Heart right ventricle (tissue), 16 donors: ENCODE measurements at regions of chr1 and their contacts with region 1.

Region 1: GRCh38 chr1:56561227-56562019 is 17.9 kb downstream of the PLPP3 start:
- DNase-seq: no peak
- ATAC-seq: peak in 6 of 8 donors; percentile 11 to 58 (median 34)
- H3K4me3 ChIP-seq: no peak overlapping the region
- H3K27ac ChIP-seq: peak overlapping the region in 8 of 10 donors; percentile 5 to 76 (median 44)
- H3K4me1 ChIP-seq: peaks cover 29 to 92% (median 78%) of the 10 kb centered on the region in 9 donors
- H3K27me3 ChIP-seq: no peaks in the 10 kb centered on the region
- CTCF ChIP-seq: no peak

Region 2: GRCh38 chr1:56491441-56491840 is 70.0 kb before region 1 on chr1:
- intact Hi-C with region 1: no loop called
- DNase-seq: no peak
- ATAC-seq: peak in 2 of 8 donors; percentile 45 to 72
- H3K4me3 ChIP-seq: no peak overlapping the region
- H3K27ac ChIP-seq: no peak overlapping the region
- H3K4me1 ChIP-seq: peaks cover 0 to 33% (median 16%) of the 10 kb centered on the region in 9 donors
- H3K27me3 ChIP-seq: no peaks in the 10 kb centered on the region
- CTCF ChIP-seq: no peak

Region 3: DNA sequence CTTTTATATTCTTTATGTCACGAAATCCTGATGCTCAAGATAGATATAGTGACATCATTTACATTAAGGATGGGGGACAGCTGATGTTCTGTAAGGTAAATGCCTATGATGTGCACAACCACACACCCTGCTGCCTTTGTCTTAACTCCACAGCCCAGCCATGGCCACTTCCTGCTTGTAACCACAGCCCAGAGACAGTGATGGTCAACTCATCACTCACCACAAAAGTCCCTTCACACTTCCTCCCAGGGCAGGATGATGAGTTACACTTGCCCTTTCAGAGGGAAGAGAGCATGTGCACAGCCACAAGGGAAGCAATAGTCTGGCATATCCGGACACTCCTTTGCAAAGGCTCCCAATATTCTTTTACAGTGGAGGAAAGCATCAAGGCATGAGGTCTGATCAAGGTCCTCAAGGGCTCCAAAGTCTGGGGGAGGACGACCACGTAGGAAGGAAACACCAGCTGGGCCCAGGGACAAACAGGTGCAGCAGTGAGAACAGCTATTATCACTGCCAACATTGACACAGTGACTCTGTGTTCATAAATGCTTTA is 35.9 kb before region 1 on chr1:
- intact Hi-C with region 1: loop called in 2 of 10 experiments (anchors 5 kb)
- DNase-seq: no peak
- ATAC-seq: peak in 7 of 8 donors; percentile 48 to 76 (median 63)
- H3K4me3 ChIP-seq: no peak overlapping the region
- H3K27ac ChIP-seq: peak overlapping the region in 7 of 10 donors; percentile 2 to 77 (median 29)
- H3K4me1 ChIP-seq: peaks cover 16 to 98% (median 93%) of the 10 kb centered on the region in 9 donors
- H3K27me3 ChIP-seq: no peaks in the 10 kb centered on the region
- CTCF ChIP-seq: no peak